Head of caudate nucleus (tissue), 42 donors: ENCODE measurements at regions of chr1 and their contacts with region 1.

Region 1: DNA sequence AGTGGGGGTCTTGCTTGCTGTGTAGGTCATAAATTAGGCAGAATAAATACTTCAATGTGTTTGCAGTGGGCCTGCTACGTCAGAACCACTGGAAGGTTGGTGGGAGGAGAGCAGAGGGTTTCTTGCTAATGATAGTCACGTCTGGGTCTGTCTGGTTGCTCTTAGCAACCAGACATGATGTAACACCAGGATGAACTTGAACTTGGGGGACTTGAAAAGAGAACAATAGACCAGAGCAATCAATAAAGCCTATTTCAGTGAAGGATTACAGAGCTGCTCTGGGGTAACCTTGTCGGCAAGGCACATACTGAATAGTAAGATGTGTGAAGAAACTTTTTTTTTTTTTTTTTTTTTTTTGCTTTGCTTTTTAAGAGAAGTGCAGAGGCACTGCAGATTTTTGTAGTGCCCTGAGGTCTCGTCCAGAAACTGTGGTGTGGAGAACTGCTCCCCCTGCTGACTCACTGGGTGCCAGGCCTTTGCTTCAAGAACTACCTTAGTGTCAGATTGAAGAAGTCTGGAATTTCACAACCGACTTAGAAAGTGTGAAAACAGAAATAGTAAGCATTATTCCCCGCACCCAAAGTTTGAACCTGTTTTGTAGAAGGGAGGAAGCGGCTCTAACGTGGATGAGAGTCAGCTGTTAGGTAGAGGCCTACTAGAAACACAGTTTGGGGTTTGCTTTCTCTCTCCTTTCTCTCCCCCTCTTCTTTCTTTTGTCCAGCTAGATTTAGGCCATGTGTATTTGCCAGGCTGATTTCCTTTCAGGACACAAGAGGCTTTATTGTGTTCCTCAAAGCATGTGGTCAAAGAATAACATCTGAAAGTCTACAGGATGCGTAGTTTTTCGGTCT is 271.6 kb downstream of the TM2D1 start:
- DNase-seq: peak; percentile 74 to 95 (median 88)

Region 2: DNA sequence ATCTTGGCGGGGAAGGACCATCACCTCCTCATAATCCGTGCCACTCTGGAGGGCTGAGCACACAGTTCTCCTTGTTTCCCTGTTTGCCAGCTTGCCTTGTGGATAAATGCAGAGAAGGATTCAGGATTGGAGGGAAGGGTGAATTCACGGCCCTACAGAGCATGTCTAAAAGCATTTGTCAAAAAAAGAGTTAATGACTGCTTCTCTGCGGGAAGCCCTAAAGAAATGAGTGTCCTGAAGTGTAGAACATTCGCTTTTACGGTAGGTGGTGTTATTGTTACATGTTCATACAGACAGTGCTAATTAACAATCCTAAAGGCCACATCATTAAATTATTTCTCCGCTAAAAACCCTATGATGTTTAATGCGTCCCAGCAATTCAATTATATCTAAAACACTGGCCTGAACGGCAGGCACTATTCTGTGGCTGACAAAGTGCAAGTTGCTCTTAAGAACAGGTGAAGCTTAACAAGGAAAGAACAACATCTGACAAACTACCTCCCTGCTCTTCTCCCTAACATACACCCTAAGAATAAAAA is 483.3 kb before region 1 on chr1:
- intact Hi-C with region 1: loop called (anchors 5 kb)
- DNase-seq: peak in 6 of 42 donors; percentile 2 to 49 (median 22)

Region 3: GRCh38 chr1:61170328-61171238 is 282.8 kb before region 1 on chr1:
- intact Hi-C with region 1: no loop called
- DNase-seq: no peak

Region 4: GRCh38 chr1:61343734-61344420 is 109.5 kb before region 1 on chr1:
- intact Hi-C with region 1: loop called (anchors 10 kb)
- DNase-seq: no peak

Region 5: DNA sequence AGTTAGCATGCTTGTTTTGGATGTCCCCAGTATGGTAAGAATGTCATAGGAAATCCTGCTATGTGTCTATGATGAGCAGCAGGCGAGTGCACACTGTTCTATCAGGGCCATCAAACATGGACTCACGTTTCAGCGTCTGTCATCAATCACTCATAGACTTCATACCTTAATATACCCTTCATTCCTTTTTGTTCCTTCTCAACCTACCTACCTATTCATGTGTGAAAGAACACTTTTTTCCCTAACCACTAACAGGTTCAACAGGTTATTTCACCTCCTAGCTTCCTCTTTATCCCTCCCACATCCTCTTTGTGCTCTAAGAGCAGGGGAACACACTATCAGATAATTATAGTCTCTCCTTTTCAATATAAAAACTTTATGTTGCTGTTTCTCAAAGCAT is 29.0 kb before region 1 on chr1:
- intact Hi-C with region 1: no loop called
- DNase-seq: no peak

Region 6: GRCh38 chr1:61724813-61725694 is 271.7 kb after region 1 on chr1 and contains the start of gene TM2D1:
- intact Hi-C with region 1: loop called (anchors 10 kb)
- DNase-seq: peak; percentile 83 to 95 (median 92)